ENCODE measurements at regions of chr17 and their contacts with region 1.

Region 1: GRCh38 chr17:75173526-75173925 is 9.2 kb downstream of the SUMO2 start:
- DNase-seq: no peak
- ATAC-seq: no peak
- H3K4me3 Mint-ChIP-seq: no peak overlapping the region
- H3K27ac Mint-ChIP-seq: no peak overlapping the region
- H3K4me1 Mint-ChIP-seq: peaks cover 32% of the 10 kb centered on the region
- H3K27me3 Mint-ChIP-seq: no peaks in the 10 kb centered on the region

Region 2: GRCh38 chr17:75131280-75132017 is 42.1 kb before region 1 on chr17 and contains the start of gene NT5C:
- CTCF ChIA-PET with region 1: interaction called, 25 read pairs
- DNase-seq: peak; percentile 86
- ATAC-seq: peak; percentile 87
- H3K4me3 Mint-ChIP-seq: peak within 1 kb of the TSS; percentile 81
- H3K27ac Mint-ChIP-seq: peak within 1 kb of the TSS; percentile 89
- H3K4me1 Mint-ChIP-seq: peaks cover 28% of the 10 kb centered on the region
- H3K27me3 Mint-ChIP-seq: no peaks in the 10 kb centered on the region
- total RNA-seq, gene NT5C: 65.2 to 73.1 TPM

Region 3: GRCh38 chr17:75147878-75148546 is 25.5 kb before region 1 on chr17:
- CTCF ChIA-PET with region 1: interaction called, 10 read pairs
- DNase-seq: no peak
- ATAC-seq: no peak
- H3K4me3 Mint-ChIP-seq: no peak overlapping the region
- H3K27ac Mint-ChIP-seq: peak overlapping the region; percentile 48
- H3K4me1 Mint-ChIP-seq: peaks cover 39% of the 10 kb centered on the region
- H3K27me3 Mint-ChIP-seq: no peaks in the 10 kb centered on the region

Region 4: DNA sequence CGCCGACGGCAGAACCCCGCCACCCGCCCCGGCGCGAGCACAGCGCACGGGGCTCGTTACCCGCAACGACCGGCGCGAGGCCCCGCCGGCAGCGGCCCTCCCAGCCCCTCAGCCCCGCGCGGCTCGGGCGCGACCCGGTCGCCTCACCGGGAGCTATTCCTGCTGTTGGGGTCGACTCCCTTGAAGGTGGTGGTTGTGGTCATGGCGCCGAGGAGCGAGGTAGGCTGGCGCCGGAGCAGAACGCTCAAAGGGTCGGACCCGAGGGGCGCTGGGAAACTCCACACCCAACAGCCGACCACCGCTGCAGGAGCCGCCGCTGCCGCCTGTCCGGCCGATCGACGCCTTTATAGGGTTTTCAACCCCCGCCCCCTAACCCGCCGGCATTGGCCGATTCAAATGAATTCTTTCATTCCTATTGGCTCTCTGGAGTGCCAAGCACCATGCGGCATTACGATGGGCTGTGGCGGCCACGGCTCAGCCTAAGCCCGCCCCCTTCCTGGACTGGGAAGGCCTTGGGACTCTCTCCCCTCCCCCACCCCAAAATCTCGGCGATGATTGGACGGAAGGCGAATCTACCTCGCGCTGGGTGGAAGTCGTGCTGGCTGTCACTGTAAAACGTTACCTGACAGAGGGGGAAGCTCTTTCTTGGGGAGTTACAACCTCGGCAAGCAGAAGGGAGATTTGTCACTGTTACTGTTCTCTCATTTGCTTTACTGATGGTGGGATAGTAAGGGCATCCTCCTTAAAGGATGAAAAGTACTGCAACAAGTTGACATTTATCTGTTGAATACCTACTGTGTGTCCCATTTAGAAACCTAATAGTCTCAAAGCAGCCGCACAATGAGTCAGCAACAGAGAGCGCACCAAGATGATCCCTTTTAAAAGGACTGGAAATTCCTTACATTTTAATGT is 19.1 kb before region 1 on chr17 and contains the start of gene JPT1:
- CTCF ChIA-PET with region 1: interaction called, 14 read pairs
- DNase-seq: peak; percentile 100
- ATAC-seq: peak; percentile 96
- H3K4me3 Mint-ChIP-seq: peak within 1 kb of the TSS; percentile 98
- H3K27ac Mint-ChIP-seq: peak within 1 kb of the TSS; percentile 90
- H3K4me1 Mint-ChIP-seq: peaks cover 36% of the 10 kb centered on the region
- H3K27me3 Mint-ChIP-seq: no peaks in the 10 kb centered on the region
- total RNA-seq, gene JPT1: 277 to 301 TPM

Region 5: DNA sequence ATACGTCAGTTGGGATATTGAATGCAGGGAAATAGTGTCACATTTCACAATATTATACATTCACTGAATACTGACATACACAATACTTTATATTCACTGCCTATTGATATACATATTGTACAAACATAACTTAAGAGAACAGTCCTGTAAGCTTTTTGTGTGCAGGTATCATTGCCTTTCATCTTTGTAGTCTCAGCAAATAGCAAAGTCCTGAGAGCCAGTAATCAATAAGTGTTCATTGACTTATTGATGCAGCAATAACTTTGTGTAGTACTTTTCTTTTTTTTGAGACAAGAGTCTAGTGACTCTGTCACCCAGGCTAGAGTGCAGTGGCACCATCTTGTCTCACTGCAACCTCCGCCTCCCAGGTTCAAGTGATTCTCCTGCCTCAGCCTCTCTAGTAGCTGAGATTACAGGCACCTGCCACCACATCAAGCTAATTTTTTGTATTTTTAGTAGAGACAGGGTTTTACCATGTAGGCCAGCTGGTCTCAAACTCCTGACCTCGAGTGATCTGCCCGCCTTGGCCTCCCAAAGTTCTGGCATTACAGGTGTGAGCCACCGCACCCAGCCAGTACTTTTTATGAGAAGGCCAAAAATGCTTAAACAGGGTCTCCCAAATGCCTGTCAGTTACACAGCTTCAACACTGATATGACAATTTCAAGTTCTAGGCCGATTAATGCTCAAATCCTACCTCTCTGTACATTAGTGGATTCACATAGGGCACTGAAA is 26.5 kb after region 1 on chr17:
- CTCF ChIA-PET with region 1: interaction called, 43 read pairs
- DNase-seq: no peak
- ATAC-seq: no peak
- H3K4me3 Mint-ChIP-seq: no peak overlapping the region
- H3K27ac Mint-ChIP-seq: no peak overlapping the region
- H3K4me1 Mint-ChIP-seq: peaks cover 11% of the 10 kb centered on the region
- H3K27me3 Mint-ChIP-seq: no peaks in the 10 kb centered on the region

Measured in activated CD8-positive, alpha-beta memory T cell treated with anti-CD3 and anti-CD28 coated beads, Interleukin-2, amount 10 ng/mL, durations not matched to agents 7 days and 5 days (primary cell).